Esophagus muscularis mucosa (tissue), 4 donors: ENCODE measurements at regions of chr3 and their contacts with region 1.

Region 1: GRCh38 chr3:120558771-120559241 is 37.3 kb upstream of the NDUFB4 start:
- DNase-seq: peak; percentile 97
- H3K4me3 ChIP-seq: peak overlapping the region; percentile 49 to 61 (median 54)
- H3K27ac ChIP-seq: peak overlapping the region; percentile 83 to 88 (median 85)
- H3K4me1 ChIP-seq: peaks cover 42 to 68% (median 60%) of the 10 kb centered on the region in 4 donors
- H3K27me3 ChIP-seq: no peaks in the 10 kb centered on the region
- CTCF ChIP-seq: peak; percentile 98 to 99 (median 99)
- EP300 ChIP-seq: no peak
- POLR2A ChIP-seq: no peak

Region 2: GRCh38 chr3:120348981-120349818 is 209.6 kb before region 1 on chr3 and contains the start of gene LRRC58:
- intact Hi-C with region 1: loop called (anchors 5 kb)
- DNase-seq: peak; percentile 95
- H3K4me3 ChIP-seq: peak within 1 kb of the TSS; percentile 69 to 94 (median 85)
- H3K27ac ChIP-seq: peak within 1 kb of the TSS; percentile 86 to 95 (median 90)
- H3K4me1 ChIP-seq: peaks cover 16 to 47% (median 34%) of the 10 kb centered on the region in 4 donors
- H3K27me3 ChIP-seq: no peaks in the 10 kb centered on the region
- CTCF ChIP-seq: peak; percentile 24 to 41 (median 36)
- EP300 ChIP-seq: no peak
- POLR2A ChIP-seq: peak; percentile 84
- total RNA-seq, gene LRRC58: 30.0 to 36.7 (median 35.2) TPM

Region 3: DNA sequence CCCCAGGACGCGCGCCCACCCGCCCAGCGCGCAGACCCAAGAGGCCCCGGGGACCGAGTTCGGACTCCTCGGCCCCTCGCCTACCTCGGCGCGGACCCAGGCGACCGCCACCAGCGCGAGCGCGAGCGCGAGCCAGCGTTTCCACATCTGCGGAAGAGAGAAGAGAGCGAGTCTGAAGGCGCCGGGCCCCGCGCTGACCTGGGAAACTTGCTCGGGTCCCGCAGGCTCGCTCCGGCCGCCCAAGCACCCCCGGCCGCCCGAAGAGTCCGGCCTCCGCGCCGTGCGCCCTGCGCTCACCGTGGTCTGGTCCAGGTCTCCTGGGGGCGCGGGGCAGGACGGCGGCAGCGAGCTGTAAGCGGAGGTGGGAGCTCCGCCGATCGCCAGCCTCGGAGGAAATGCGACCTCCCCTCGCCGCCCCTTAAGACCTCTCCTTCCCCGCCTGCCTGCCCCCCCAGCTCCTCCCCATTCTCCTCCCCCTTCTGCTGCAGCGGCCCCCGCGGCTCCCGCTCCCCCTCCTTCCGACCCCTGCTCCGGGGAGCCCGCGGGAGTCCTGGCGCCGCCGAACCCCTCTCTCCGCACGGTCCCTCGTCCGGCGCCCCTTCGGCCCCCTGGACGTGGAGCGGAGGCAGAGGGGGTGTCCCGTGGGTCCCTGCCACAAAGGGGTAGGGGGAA is 108.1 kb before region 1 on chr3 and contains the start of gene FSTL1:
- intact Hi-C with region 1: loop called (anchors 10 kb)
- DNase-seq: no peak
- H3K4me3 ChIP-seq: peak within 1 kb of the TSS; percentile 67 to 98 (median 91)
- H3K27ac ChIP-seq: peak within 1 kb of the TSS; percentile 93 to 100 (median 97)
- H3K4me1 ChIP-seq: peaks cover 41 to 48% (median 46%) of the 10 kb centered on the region in 4 donors
- H3K27me3 ChIP-seq: no peaks in the 10 kb centered on the region
- CTCF ChIP-seq: peak in 1 of 3 experiments; percentile 2
- EP300 ChIP-seq: no peak
- POLR2A ChIP-seq: peak; percentile 43
- total RNA-seq, gene FSTL1: 409 to 701 (median 677) TPM

Region 4: GRCh38 chr3:120742198-120742849 is 183.5 kb after region 1 on chr3 and contains the starts of genes GTF2E1 and RABL3:
- intact Hi-C with region 1: loop called (anchors 10 kb)
- DNase-seq: peak; percentile 100
- H3K4me3 ChIP-seq: peak within 1 kb of the TSS; percentile 64 to 96 (median 80)
- H3K27ac ChIP-seq: peak within 1 kb of the TSS; percentile 91 to 97 (median 94)
- H3K4me1 ChIP-seq: peaks cover 16 to 26% (median 21%) of the 10 kb centered on the region in 4 donors
- H3K27me3 ChIP-seq: no peaks in the 10 kb centered on the region
- CTCF ChIP-seq: no peak
- EP300 ChIP-seq: no peak
- POLR2A ChIP-seq: no peak
- total RNA-seq, gene GTF2E1: 9.4 to 18.2 (median 13.9) TPM
- total RNA-seq, gene RABL3: 16.9 to 23.9 (median 20.7) TPM